ENCODE measurements at regions of chrX and their contacts with region 1.

Region 1: DNA sequence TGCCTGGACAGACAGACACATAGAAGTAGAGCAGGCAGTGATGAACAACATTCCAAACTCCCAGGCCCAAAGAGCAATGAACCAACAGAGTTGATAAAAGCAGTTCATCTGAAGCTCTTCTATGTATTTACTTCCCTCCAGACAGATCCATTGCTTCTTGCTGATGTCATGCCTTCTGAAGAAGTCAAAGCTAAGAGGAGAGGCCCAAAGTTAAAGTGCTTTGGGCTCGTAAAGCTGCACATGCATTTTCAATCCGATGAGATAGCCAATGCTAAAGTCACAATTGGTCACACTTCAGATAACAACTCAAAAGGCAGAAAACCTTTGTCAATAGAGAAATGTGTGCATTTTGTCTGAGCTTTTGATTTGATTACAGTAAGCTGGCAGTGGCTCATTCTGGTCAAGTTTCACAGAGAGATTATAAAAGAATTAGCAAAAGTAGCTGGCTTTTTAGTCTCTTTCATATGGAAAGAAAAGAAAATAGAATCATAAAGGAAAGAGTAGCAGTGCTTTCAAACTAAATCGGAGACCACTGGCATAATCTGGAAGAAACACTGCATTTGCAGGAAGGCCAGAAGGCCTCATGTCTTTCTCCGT is 82.0 kb downstream of the GPC4 start:
- DNase-seq: no peak
- ATAC-seq: no peak

Region 2: DNA sequence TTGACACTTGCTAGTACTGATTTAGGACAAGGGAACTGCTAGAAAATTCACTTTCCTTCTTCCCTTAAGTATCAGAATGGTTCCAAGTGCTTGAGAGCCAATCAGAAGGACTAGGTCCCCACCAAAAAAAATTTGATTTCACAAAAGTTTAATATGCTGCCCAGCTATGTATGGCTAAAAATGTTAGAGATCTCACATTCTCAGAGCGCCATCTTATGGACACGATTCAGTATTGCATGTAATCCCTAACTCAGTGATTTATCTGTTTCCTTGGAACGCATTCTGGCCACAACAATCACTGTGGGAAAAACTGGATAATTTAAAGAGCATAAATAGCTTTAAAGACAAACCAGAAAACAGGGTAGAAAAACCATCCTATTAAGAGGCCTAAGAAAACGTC is 337.1 kb after region 1 on chrX:
- intact Hi-C with region 1: loop called in 1 of 2 experiments (anchors 5 kb)
- DNase-seq: no peak
- ATAC-seq: peak; percentile 61